ENCODE measurements at regions of chr14 and their contacts with region 1.

Region 1: GRCh38 chr14:50003213-50004031 is 110.5 kb downstream of the ARF6 start:
- DNase-seq: no peak
- ATAC-seq: peak; percentile 52
- H3K4me3 ChIP-seq: peak overlapping the region; percentile 44 to 54
- H3K27ac ChIP-seq: peak overlapping the region; percentile 100
- H3K4me1 ChIP-seq: peaks cover 69% of the 10 kb centered on the region
- H3K27me3 ChIP-seq: no peaks in the 10 kb centered on the region
- CTCF ChIP-seq: no peak

Region 2: GRCh38 chr14:49594347-49595089 is 408.9 kb before region 1 on chr14:
- CTCF ChIA-PET with region 1: no interaction called
- POLR2A ChIA-PET with region 1: interaction called, 11 read pairs
- in situ Hi-C with region 1: no loop called
- intact Hi-C with region 1: no loop called
- DNase-seq: no peak
- ATAC-seq: no peak
- H3K4me3 ChIP-seq: no peak overlapping the region
- H3K27ac ChIP-seq: peak overlapping the region; percentile 5
- H3K4me1 ChIP-seq: peaks cover 9% of the 10 kb centered on the region; the same call in 1 of the 2 replicates
- H3K27me3 ChIP-seq: no peaks in the 10 kb centered on the region
- CTCF ChIP-seq: no peak

Region 3: GRCh38 chr14:49897968-49898367 is 105.5 kb before region 1 on chr14:
- CTCF ChIA-PET with region 1: interaction called, 4 read pairs
- POLR2A ChIA-PET with region 1: interaction called, 9 read pairs
- in situ Hi-C with region 1: no loop called
- intact Hi-C with region 1: loop called (anchors 2 kb)
- DNase-seq: no peak
- ATAC-seq: no peak
- H3K4me3 ChIP-seq: peak overlapping the region; percentile 48 to 75
- H3K27ac ChIP-seq: peak overlapping the region; percentile 97
- H3K4me1 ChIP-seq: peaks cover 16% of the 10 kb centered on the region
- H3K27me3 ChIP-seq: no peaks in the 10 kb centered on the region
- CTCF ChIP-seq: no peak

Region 4: GRCh38 chr14:50070840-50071548 is 67.6 kb after region 1 on chr14:
- CTCF ChIA-PET with region 1: no interaction called
- POLR2A ChIA-PET with region 1: no interaction called
- in situ Hi-C with region 1: no loop called
- intact Hi-C with region 1: no loop called
- DNase-seq: no peak
- ATAC-seq: no peak
- H3K4me3 ChIP-seq: no peak overlapping the region
- H3K27ac ChIP-seq: peak overlapping the region; percentile 44; the same call in 1 of the 2 replicates
- H3K4me1 ChIP-seq: no peaks in the 10 kb centered on the region
- H3K27me3 ChIP-seq: no peaks in the 10 kb centered on the region
- CTCF ChIP-seq: no peak

Region 5: DNA sequence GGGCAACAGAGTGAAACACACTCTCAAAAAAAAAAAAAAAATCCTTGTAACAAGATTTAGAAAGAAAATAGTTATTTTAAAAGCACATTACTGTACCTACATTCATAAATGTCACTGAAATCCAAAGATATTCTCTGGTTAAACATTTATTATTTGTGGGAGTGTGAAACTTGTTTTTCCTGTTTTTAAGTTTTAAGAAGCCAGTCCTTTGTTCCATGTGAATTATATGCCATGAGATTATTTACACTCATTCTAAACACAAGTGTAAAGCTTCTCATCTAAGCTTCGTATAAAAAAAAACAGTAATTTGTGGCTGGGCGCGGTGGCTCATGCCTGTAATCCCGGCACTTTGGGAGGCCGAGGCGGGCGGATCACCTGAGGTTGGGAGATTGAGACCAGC is 98.0 kb after region 1 on chr14:
- CTCF ChIA-PET with region 1: interaction called, 3 read pairs
- POLR2A ChIA-PET with region 1: interaction called, 5 read pairs
- in situ Hi-C with region 1: no loop called
- intact Hi-C with region 1: loop called (anchors 5 kb)
- DNase-seq: no peak
- ATAC-seq: no peak
- H3K4me3 ChIP-seq: no peak overlapping the region
- H3K27ac ChIP-seq: peak overlapping the region; percentile 51; the same call in 1 of the 2 replicates
- H3K4me1 ChIP-seq: peaks cover 3% of the 10 kb centered on the region; the same call in 1 of the 2 replicates
- H3K27me3 ChIP-seq: no peaks in the 10 kb centered on the region
- CTCF ChIP-seq: no peak

Measured in Panc1 (cell line).